ENCODE measurements at regions of chr20 and their contacts with region 1.

Region 1: DNA sequence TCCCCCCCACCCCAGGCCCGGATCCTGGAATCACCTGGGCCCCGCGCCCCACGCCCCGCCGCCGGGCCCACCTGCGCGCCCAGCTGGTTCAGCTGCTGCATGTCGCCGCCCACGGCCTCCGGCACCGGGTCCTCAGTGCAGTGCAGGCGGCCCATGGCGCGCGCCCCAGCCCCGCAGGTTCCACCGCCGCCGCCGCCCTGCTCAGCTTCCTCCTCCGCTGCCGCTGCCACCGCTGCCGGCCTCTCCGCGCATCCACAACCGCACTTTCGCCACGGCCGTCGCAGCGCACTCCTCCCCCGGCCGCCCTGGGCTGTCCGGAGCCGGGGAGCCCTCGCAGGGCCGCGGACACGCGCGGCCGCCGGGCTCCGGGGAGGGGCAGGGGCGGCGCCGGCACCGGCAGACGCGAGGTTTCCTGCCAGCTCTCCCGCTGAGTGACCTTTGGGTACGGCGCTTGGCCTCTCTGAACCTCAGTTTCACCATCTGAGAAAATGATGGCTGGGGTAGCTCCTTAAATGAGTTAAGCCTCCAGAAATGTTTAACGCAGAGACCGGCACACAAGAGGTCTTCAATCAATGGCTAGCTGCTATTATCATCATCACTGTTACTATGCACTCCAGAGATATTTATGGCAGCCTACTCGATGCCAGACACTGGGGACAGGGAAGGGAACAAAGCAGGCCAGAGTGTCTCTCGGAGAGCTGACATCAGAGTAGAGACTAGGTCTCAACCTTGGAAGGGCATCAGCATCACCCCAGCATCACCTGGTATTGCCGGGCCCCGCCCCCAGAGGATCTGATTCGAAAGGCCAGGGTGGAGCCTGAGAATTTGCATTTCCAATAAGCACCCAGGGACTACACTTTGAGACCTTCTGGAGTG is at the start of gene COMMD7:
- DNase-seq: peak; percentile 38 to 73 (median 57)
- ATAC-seq: peak; percentile 81 to 87 (median 85)
- H3K4me3 ChIP-seq: peak within 1 kb of the TSS; percentile 63 to 94
- H3K4me3 Mint-ChIP-seq: peak within 1 kb of the TSS; percentile 94 to 99 (median 98)
- H3K27ac ChIP-seq: peak within 1 kb of the TSS; percentile 91
- H3K27ac Mint-ChIP-seq: peak within 1 kb of the TSS; percentile 97 to 99
- H3K4me1 ChIP-seq: peaks cover 6 to 30% of the 10 kb centered on the region in 2 experiments
- H3K4me1 Mint-ChIP-seq: peaks cover 30 to 39% (median 35%) of the 10 kb centered on the region in 3 donors
- H3K27me3 ChIP-seq: no peaks in the 10 kb centered on the region
- H3K27me3 Mint-ChIP-seq: no peaks in the 10 kb centered on the region
- total RNA-seq, gene COMMD7: 35.5 to 48.1 (median 37.4) TPM

Region 2: DNA sequence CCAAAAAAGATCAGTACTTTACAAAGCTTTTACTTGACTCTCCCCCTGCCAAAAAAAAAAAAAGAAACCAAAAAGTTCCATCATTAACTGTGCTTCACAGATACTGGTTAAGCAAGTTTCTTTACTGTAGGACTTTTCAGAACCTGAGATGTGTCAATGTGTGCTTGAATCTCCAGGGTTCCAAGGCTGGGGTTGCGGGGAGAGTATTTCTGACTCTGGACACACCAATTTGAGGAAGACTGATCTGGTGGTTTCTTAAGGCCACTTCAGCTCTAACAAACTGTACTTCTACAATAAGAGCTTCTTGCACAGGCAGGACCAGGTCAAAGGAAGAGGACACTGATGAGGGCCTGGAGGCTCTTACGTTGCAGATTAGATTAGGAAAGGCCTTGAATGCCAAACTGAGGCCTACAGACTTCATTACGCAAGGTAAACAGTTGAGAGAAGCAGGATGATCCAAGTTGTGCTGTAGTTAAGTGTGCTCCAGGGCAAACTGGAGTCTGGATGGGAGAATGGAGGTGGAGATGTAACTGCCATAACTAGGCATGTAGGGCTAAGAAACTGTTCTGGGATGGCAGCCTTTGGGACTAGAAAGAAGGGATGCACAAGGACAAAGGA is 24.6 kb before region 1 on chr20:
- CTCF ChIA-PET with region 1: no interaction called
- POLR2A ChIA-PET with region 1: interaction called in 1 of 2 experiments, 11 read pairs
- DNase-seq: no peak
- ATAC-seq: no peak
- H3K4me3 ChIP-seq: no peak overlapping the region
- H3K4me3 Mint-ChIP-seq: no peak overlapping the region
- H3K27ac ChIP-seq: no peak overlapping the region
- H3K27ac Mint-ChIP-seq: no peak overlapping the region
- H3K4me1 ChIP-seq: no peaks in the 10 kb centered on the region
- H3K4me1 Mint-ChIP-seq: peaks cover 0 to 5% (median 3%) of the 10 kb centered on the region in 3 donors
- H3K27me3 ChIP-seq: no peaks in the 10 kb centered on the region
- H3K27me3 Mint-ChIP-seq: no peaks in the 10 kb centered on the region